CD8-positive, alpha-beta memory T cell (primary cell): ENCODE measurements at regions of chr12 and their contacts with region 1.

Region 1: DNA sequence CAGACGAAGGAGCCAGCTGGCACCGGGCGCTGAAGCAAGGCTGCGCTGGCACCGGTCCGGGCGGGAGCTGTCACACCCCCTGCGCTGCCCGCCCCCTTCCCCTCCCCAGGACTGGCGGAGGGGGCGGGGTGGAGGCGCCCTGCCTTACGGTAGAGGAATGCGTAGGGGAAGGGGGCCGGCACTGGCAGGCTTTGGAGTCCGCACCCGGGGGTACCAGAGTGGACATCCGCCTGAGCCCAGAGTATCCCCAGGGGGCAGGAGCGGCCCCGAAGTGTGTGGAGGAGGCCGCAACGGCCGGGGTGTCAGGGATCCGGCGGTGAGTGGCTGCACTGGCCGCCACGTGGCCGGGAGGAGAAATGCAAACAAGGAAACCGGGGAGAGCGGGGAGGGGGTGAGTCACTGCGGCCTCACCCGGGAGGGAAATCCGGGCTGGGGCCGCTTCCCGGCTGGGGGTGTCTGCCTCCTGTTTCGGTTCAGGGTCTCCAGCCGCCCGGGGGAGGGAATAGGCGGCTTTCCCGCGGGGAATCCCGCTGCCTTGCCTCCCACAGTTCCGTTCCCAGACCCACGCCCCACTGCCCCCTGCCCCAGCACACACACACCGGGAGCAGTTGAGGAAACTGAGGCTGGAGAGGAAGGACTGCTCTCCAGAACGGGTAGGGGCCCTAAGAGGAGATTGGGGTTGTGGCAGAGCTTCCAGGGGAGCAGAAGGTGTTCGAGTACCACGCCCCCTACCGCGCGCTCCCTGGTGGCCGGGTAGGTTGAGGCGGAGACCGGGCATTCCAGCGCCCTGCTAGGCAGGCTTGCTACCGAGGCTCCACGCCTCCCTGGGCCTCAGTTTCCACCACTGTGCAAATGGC is at the start of gene RAPGEF3:
- DNase-seq: peak; percentile 51 to 80 (median 60)
- H3K4me3 ChIP-seq: peak within 1 kb of the TSS; percentile 66
- H3K4me3 Mint-ChIP-seq: peak within 1 kb of the TSS; percentile 68 to 90 (median 75)
- H3K27ac ChIP-seq: peak within 1 kb of the TSS; percentile 31
- H3K27ac Mint-ChIP-seq: peak within 1 kb of the TSS in 3 of 8 donors; percentile 23 to 56 (median 50)
- H3K4me1 ChIP-seq: peaks cover 11% of the 10 kb centered on the region
- H3K4me1 Mint-ChIP-seq: peaks cover 11 to 31% (median 15%) of the 10 kb centered on the region in 3 donors
- H3K27me3 ChIP-seq: no peaks in the 10 kb centered on the region
- H3K27me3 Mint-ChIP-seq: no peaks in the 10 kb centered on the region
- total RNA-seq, gene RAPGEF3: 0.95 to 1.1 TPM

Region 2: DNA sequence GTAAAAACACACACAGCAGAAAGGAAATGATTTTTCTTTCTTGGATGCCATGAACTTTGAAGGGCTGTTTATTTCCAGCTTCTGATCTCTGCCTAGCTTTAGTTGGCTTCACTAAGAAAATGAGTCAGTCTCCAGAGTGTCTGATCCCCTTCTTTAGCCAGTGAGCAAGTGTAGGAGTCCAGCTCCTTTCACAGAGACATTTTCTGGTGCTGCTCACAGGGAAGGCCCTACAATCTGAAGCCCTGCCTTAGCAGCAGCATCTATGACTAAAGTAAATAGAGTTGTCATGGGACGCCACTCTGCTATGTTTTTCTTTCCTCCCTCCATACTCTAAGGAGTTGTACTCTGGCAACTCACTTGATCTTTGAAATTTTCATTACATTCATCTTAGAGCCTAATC is 156.7 kb before region 1 on chr12:
- CTCF ChIA-PET with region 1: no interaction called
- POLR2A ChIA-PET with region 1: no interaction called
- DNase-seq: no peak
- H3K4me3 ChIP-seq: no peak overlapping the region
- H3K4me3 Mint-ChIP-seq: no peak overlapping the region
- H3K27ac ChIP-seq: no peak overlapping the region
- H3K27ac Mint-ChIP-seq: no peak overlapping the region
- H3K4me1 ChIP-seq: no peaks in the 10 kb centered on the region
- H3K4me1 Mint-ChIP-seq: peaks cover 0 to 3% (median 0%) of the 10 kb centered on the region in 3 donors
- H3K27me3 ChIP-seq: no peaks in the 10 kb centered on the region
- H3K27me3 Mint-ChIP-seq: peaks cover 0 to 2% of the 10 kb centered on the region in 2 donors

Region 3: GRCh38 chr12:47705566-47706425 is 53.3 kb before region 1 on chr12 and contains the start of gene RPAP3:
- CTCF ChIA-PET with region 1: interaction called, 13 read pairs
- POLR2A ChIA-PET with region 1: no interaction called
- DNase-seq: peak; percentile 91 to 97 (median 95)
- H3K4me3 ChIP-seq: peak within 1 kb of the TSS; percentile 83
- H3K4me3 Mint-ChIP-seq: peak within 1 kb of the TSS; percentile 90 to 99 (median 98)
- H3K27ac ChIP-seq: peak within 1 kb of the TSS; percentile 79
- H3K27ac Mint-ChIP-seq: peak within 1 kb of the TSS; percentile 90 to 100 (median 94)
- H3K4me1 ChIP-seq: peaks cover 40% of the 10 kb centered on the region
- H3K4me1 Mint-ChIP-seq: peaks cover 39 to 73% (median 61%) of the 10 kb centered on the region in 3 donors
- H3K27me3 ChIP-seq: no peaks in the 10 kb centered on the region
- H3K27me3 Mint-ChIP-seq: no peaks in the 10 kb centered on the region
- total RNA-seq, gene RPAP3: 54.0 to 58.1 TPM

Region 4: DNA sequence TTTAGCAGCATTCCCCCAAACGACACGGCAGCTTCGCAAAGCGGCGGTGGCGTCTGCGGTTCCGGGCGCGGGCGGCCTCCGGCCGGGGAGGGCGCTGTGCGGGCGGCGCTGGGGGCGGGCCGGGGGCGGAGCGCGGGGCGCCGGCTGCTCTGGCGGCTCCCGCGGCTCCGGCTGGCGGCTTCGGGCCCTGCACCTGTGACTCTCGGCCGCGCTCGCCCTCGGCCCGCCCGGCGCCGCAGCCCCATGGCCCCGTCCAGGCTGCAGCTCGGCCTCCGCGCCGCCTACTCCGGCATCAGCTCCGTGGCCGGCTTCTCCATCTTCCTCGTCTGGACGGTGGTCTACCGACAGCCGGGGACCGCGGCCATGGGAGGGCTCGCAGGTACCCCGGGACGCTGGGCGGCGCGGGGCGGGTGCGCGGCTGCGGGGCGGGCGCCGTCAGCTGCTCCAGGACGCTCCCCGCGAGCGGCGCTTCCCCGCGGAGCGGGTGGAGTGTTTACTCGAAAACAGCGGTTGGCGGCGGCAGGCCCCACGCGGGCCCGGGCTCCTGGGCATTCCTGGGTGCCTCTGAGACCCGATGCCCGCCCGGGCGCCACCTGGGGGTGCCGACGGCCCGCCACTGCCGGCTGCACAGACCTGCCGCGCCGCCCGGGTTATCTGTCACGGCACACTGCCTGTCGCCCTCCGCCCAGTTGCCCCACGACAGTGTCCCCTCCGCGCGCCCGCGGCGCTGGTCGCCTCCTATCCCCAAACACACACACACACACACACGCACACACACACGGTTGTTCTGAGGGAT is 14.2 kb after region 1 on chr12 and contains the start of gene SLC48A1:
- CTCF ChIA-PET with region 1: interaction called, 78 read pairs
- POLR2A ChIA-PET with region 1: interaction called, 5 read pairs
- DNase-seq: peak; percentile 59 to 79 (median 71)
- H3K4me3 ChIP-seq: peak within 1 kb of the TSS; percentile 54
- H3K4me3 Mint-ChIP-seq: peak within 1 kb of the TSS; percentile 84 to 92 (median 86)
- H3K27ac ChIP-seq: peak within 1 kb of the TSS; percentile 74
- H3K27ac Mint-ChIP-seq: peak within 1 kb of the TSS in 7 of 8 donors; percentile 51 to 88 (median 73)
- H3K4me1 ChIP-seq: peaks cover 15% of the 10 kb centered on the region
- H3K4me1 Mint-ChIP-seq: peaks cover 14 to 18% (median 16%) of the 10 kb centered on the region in 3 donors
- H3K27me3 ChIP-seq: no peaks in the 10 kb centered on the region
- H3K27me3 Mint-ChIP-seq: peaks cover 0 to 4% of the 10 kb centered on the region in 2 donors
- total RNA-seq, gene SLC48A1: 10.9 to 11.5 TPM

Region 5: GRCh38 chr12:47779301-47779942 is 20.4 kb after region 1 on chr12:
- CTCF ChIA-PET with region 1: interaction called, 33 read pairs
- POLR2A ChIA-PET with region 1: no interaction called
- DNase-seq: peak; percentile 77 to 92 (median 85)
- H3K4me3 ChIP-seq: no peak overlapping the region
- H3K4me3 Mint-ChIP-seq: peak overlapping the region in 1 of 7 donors; percentile 75
- H3K27ac ChIP-seq: no peak overlapping the region
- H3K27ac Mint-ChIP-seq: peak overlapping the region in 5 of 8 donors; percentile 8 to 66 (median 39)
- H3K4me1 ChIP-seq: peaks cover 8% of the 10 kb centered on the region
- H3K4me1 Mint-ChIP-seq: peaks cover 7 to 15% (median 9%) of the 10 kb centered on the region in 3 donors
- H3K27me3 ChIP-seq: no peaks in the 10 kb centered on the region
- H3K27me3 Mint-ChIP-seq: no peaks in the 10 kb centered on the region